H1 (cell line): ENCODE measurements at regions of chr6 and their contacts with region 1.

Region 1: DNA sequence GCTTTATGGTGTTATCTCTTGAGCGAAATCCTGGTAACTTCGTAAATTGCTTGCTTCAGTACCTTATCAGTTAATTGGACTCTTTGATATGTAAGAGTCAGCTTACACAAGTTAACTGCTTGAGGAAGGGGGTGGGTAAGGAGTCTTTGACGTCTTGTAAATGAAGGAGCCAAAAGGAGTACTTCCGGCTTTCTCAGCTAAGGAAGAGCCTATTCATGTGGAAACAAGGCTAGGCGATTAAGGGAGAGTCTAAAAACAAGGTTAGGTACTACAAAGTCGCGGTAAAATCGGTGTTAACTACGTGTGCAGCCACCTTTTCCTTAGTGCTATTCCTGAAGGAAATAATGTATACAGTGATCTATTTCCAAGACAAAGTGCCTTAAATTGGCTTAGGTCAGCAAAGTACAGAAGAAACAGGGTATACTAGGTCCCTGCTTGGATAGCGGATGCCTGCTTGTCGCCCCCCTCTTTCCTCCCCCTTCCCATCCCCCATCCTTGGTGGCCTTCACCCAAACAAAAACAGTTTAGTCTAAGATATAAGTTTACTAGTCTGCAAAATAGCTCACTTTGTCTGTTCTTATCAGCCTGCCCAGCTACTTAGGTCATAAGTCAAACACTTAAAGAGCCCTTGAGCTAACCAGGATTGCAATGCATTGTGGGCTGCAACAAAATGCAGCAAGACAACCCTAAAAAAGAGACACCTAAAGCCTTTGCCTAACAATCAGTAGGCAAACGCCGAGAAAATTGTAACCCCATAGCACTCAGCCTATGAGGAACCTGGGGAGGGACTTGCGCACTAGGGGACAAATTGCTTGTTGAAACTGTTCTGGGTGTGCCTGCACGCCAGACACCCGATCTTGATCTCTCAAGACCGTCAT is 147.3 kb downstream of the TRIM27 start:
- DNase-seq: no peak
- H3K4me3 ChIP-seq: peak overlapping the region; percentile 17 to 58 (median 28); a peak in 6 of 8 replicates
- H3K27ac ChIP-seq: no peak overlapping the region
- H3K4me1 ChIP-seq: peaks cover 7 to 26% (median 17%) of the 10 kb centered on the region in 4 experiments
- H3K27me3 ChIP-seq: peaks cover 70 to 90% (median 81%) of the 10 kb centered on the region in 4 experiments
- CTCF ChIP-seq: no peak
- EP300 ChIP-seq: no peak
- POLR2A ChIP-seq: no peak
- RAD21 ChIP-seq: no peak

Region 2: DNA sequence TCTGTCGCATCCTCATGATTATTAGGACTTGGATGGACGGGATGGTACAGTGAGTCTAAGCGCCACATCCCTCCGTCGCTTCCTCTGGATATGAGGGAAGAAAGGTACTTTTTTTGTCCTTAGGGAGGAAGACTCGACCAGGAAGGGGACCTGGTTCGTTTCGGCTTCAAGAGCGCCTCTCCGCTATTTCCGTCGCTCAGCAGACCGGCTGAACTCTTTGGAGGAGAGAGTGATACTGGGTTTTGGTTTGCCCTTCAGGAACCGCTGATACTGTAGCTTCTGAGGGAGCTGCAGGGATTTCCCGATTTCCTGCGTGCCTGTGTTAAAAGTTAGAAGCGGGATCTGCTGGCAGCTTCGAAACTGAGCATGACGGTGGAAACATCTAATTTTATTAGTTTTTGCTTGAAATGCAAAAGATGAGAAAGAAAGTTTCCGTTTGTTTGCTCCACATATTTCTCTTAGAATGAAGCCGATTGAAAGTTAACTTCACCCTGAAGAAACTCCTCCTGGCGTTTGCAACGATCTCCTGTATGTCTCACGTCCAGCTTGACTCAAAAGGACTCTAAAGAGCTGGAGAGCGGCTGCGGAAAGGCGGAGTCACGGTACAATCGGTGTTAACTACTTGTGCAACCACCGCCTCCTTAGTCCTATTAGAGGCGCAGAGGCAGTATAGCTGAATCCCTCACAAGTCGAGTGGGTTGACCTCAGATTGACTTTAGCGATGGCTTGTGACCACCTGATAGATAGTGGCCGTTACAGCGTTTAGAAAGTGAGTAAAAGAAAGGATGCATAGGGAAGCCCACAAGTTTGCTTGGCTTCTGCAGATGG is 17.9 kb after region 1 on chr6:
- CTCF ChIA-PET with region 1: interaction called, 12 read pairs
- POLR2A ChIA-PET with region 1: interaction called, 5 read pairs
- DNase-seq: no peak
- H3K4me3 ChIP-seq: peak overlapping the region; percentile 55 to 79 (median 68)
- H3K27ac ChIP-seq: no peak overlapping the region
- H3K4me1 ChIP-seq: peaks cover 0 to 4% (median 0%) of the 10 kb centered on the region in 4 experiments; a peak in 3 of 7 replicates
- H3K27me3 ChIP-seq: peaks cover 8 to 32% (median 29%) of the 10 kb centered on the region in 4 experiments
- CTCF ChIP-seq: no peak
- EP300 ChIP-seq: no peak
- POLR2A ChIP-seq: no peak
- RAD21 ChIP-seq: no peak